ENCODE measurements at regions of chr2 and their contacts with region 1.

Region 1: DNA sequence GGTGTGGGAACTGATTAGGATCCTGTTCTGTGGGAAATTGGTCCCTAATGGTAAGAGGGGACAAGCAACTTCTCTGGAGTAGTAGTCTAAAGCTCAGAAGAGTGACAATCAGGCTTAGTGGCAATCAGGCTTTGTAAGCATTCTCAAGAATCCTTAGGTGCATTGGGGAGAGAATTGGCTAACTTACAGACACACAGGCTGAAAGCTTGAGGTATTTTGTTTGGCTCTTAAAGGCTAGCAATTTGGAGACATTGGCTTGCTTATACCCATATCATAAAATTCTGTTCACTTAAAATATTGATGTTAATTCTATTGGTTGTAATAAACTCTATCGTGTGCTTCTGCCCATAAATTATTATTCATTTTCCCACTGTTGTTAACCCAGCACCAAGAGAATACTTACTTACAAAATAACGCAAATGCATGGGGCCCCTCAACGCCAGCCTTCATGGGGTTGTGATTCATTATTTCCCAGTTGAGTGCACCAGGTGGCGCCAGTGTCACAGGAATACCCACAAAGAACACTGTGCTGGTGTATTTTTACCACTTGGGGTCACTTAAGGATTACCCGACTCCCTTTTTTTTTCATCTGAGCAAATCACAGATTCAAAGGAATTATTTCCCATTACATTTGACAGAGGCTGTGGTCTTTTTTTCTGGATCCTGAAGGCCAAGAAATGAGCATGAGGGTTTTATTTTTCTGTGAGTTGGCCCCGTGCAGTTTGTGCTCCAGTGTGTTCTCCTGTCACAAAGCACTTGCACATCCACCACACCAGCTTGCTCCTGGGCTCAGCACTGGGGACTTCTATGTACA is 45.5 kb downstream of the DDX1 start:
- DNase-seq: peak; percentile 58
- ATAC-seq: peak; percentile 57
- H3K4me3 ChIP-seq: no peak overlapping the region
- H3K27ac ChIP-seq: no peak overlapping the region
- H3K4me1 ChIP-seq: peaks cover 11% of the 10 kb centered on the region
- H3K27me3 ChIP-seq: no peaks in the 10 kb centered on the region
- CTCF ChIP-seq: peak; percentile 95

Region 2: GRCh38 chr2:15325296-15325695 is 311.9 kb before region 1 on chr2:
- CTCF ChIA-PET with region 1: no interaction called
- POLR2A ChIA-PET with region 1: no interaction called
- intact Hi-C with region 1: no loop called
- DNase-seq: no peak
- ATAC-seq: no peak
- H3K4me3 ChIP-seq: no peak overlapping the region
- H3K27ac ChIP-seq: no peak overlapping the region
- H3K4me1 ChIP-seq: no peaks in the 10 kb centered on the region
- H3K27me3 ChIP-seq: no peaks in the 10 kb centered on the region
- CTCF ChIP-seq: no peak

Region 3: GRCh38 chr2:15472133-15472532 is 165.0 kb before region 1 on chr2:
- CTCF ChIA-PET with region 1: no interaction called
- POLR2A ChIA-PET with region 1: no interaction called
- intact Hi-C with region 1: no loop called
- DNase-seq: peak; percentile 47
- ATAC-seq: no peak
- H3K4me3 ChIP-seq: no peak overlapping the region
- H3K27ac ChIP-seq: no peak overlapping the region
- H3K4me1 ChIP-seq: no peaks in the 10 kb centered on the region
- H3K27me3 ChIP-seq: no peaks in the 10 kb centered on the region
- CTCF ChIP-seq: no peak

Region 4: DNA sequence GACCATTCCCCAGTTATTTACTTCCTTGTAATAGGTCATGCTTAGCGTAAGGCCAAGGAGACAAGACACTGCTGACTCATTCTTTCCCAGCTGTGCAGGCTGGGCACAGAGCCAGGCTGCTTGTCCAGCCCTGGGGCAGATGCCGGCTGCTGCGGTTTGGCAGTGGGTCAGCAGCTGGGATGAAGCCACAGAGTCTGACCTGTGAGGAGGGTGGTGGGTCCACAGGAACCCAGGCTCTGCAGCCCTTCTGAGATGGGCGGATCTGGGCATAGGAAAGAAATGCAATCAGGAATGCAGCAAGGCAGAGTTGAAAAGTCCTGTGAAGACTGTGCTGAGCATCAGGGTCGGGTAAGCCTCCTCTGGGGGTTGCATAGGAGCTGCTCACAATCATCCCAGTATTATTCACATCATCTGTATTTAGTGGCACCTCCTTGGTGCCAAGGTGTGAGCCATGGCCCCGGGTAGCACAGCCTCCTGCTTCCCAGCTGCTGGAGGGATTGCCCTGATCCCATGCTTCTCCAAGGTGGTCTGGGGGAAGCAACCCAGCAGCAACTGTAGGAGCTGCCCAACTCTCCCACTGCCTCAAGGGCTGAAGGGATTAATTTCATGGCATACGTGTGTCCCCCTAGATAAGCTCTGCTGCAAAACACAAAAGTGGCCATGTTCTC is 93.5 kb after region 1 on chr2:
- CTCF ChIA-PET with region 1: no interaction called
- POLR2A ChIA-PET with region 1: no interaction called
- intact Hi-C with region 1: loop called (anchors 5 kb)
- DNase-seq: peak; percentile 93
- ATAC-seq: peak; percentile 80
- H3K4me3 ChIP-seq: no peak overlapping the region
- H3K27ac ChIP-seq: no peak overlapping the region
- H3K4me1 ChIP-seq: peaks cover 12% of the 10 kb centered on the region
- H3K27me3 ChIP-seq: peaks cover 68% of the 10 kb centered on the region
- CTCF ChIP-seq: no peak

Region 5: DNA sequence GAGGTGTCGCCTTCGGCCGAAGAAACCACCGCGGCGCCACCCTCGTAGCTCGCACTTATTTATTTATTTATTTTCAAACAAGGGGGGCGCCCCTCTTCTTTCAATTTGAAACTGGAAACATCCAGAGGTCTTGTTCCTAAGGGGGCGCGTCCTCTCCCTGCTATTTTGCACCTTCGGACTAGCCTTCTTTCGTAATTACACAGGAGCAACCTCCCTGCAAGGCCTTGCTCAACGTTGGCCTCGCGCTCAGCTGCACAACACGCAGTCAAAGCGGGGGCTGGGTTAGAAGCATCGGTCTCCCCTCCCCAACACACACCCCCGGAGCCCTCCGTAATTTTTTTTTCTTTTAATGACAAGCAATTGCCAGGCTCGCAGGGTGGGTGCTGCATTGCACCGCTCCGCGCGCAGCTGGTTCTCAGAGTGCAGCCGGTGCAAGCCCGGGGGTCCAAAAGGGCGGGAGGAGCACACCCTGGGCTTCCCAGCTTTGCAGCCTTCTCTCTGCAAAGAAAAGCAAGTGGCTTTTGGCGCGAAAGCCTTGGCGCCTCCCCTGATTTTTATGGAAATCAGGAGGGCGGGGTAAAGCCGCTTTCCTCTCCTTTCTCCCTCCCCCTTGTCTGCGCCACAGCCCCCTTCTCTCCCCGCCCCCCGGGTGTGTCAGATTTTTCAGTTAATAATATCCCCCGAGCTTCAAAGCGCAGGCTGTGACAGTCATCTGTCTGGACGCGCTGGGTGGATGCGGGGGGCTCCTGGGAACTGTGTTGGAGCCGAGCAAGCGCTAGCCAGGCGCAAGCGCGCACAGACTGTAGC is 302.9 kb after region 1 on chr2 and contains the start of gene MYCN:
- CTCF ChIA-PET with region 1: no interaction called
- POLR2A ChIA-PET with region 1: no interaction called
- intact Hi-C with region 1: loop called (anchors 2 kb)
- DNase-seq: no peak
- ATAC-seq: peak; percentile 36
- H3K4me3 ChIP-seq: peak within 1 kb of the TSS; percentile 41; the same call in 1 of the 2 replicates
- H3K27ac ChIP-seq: no peak within 1 kb of the TSS
- H3K4me1 ChIP-seq: 0 out of 2 replicates have a peak, but pooled peaks cover 6% of the 10 kb centered on the region
- H3K27me3 ChIP-seq: peaks cover 67% of the 10 kb centered on the region
- CTCF ChIP-seq: peak; percentile 76; the same call in 1 of the 2 replicates
- total RNA-seq, gene MYCN: not detected in 2 replicates

Region 6: GRCh38 chr2:16756831-16757644 is 1119.9 kb after region 1 on chr2:
- CTCF ChIA-PET with region 1: no interaction called
- POLR2A ChIA-PET with region 1: no interaction called
- intact Hi-C with region 1: loop called (anchors 2 kb)
- DNase-seq: peak; percentile 62
- ATAC-seq: peak; percentile 57
- H3K4me3 ChIP-seq: no peak overlapping the region
- H3K27ac ChIP-seq: no peak overlapping the region
- H3K4me1 ChIP-seq: no peaks in the 10 kb centered on the region
- H3K27me3 ChIP-seq: peaks cover 21% of the 10 kb centered on the region
- CTCF ChIP-seq: peak; percentile 91